Aorta (tissue), 5 donors: ENCODE measurements at regions of chr1 and their contacts with region 1.

Region 1: DNA sequence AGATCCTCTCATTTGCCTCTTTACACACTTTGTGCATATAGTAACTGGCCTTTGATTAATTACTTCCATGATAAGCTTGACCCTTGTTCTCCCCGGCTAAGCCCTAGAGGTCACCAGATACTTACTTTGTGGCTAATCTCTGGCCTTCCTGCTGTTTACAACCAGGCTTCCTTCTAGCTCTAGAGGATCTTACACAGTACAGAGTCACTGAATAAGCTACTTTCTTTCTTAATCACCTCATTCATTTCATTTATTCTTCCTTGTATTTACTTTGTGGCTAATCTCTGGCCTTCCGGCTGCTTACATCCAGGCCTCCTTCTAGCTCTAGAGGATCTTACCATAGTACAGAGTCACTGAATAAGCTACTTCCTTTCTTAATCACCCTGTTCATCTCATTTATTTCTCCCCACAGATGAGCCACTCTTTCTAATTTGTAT is 144.3 kb upstream of the C1orf21 start:
- DNase-seq: no peak
- ATAC-seq: peak; percentile 50
- H3K4me3 ChIP-seq: no peak overlapping the region
- H3K27ac ChIP-seq: no peak overlapping the region
- H3K4me1 ChIP-seq: no peaks in the 10 kb centered on the region
- H3K27me3 ChIP-seq: no peaks in the 10 kb centered on the region

Region 2: GRCh38 chr1:184283999-184284398 is 41.5 kb after region 1 on chr1:
- intact Hi-C with region 1: no loop called
- DNase-seq: no peak
- ATAC-seq: no peak
- H3K4me3 ChIP-seq: no peak overlapping the region
- H3K27ac ChIP-seq: no peak overlapping the region
- H3K4me1 ChIP-seq: no peaks in the 10 kb centered on the region
- H3K27me3 ChIP-seq: no peaks in the 10 kb centered on the region

Region 3: DNA sequence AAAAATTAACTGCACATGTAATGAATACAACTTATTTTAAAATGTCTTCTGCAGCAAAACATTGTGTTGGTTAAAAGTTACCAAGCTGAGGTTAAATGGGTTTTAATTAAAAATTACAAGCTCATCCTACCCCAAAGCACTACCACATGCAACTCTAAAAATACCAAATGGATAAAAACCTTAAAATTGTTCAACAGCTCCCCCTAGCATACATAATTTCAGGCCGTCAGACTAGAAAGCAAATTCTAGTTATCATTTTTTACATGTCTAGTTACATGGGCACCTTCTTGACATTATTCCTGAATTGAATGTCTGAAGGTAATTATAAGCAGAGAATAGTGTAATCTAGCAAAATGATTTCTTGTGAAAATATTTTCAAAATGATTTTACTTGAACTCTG is 320.8 kb after region 1 on chr1:
- intact Hi-C with region 1: loop called in 1 of 2 experiments (anchors 10 kb)
- DNase-seq: no peak
- ATAC-seq: peak; percentile 49
- H3K4me3 ChIP-seq: no peak overlapping the region
- H3K27ac ChIP-seq: no peak overlapping the region
- H3K4me1 ChIP-seq: peaks cover 0 to 11% of the 10 kb centered on the region in 2 donors
- H3K27me3 ChIP-seq: no peaks in the 10 kb centered on the region